BJ (cell line): ENCODE measurements at regions of chr22 and their contacts with region 1.

Region 1: GRCh38 chr22:31080848-31081649 is at the start of gene SMTN:
- DNase-seq: peak; percentile 41
- H3K4me3 ChIP-seq: peak within 1 kb of the TSS; percentile 63
- H3K27me3 ChIP-seq: no peaks in the 10 kb centered on the region
- CTCF ChIP-seq: no peak
- polyA plus RNA-seq, gene SMTN: 16.9 and 45.7 TPM in 2 replicates

Region 2: GRCh38 chr22:30968924-30969539 is 112.0 kb before region 1 on chr22 and contains the start of gene TUG1:
- CTCF ChIA-PET with region 1: interaction called, 29 read pairs
- POLR2A ChIA-PET with region 1: interaction called, 6 read pairs
- DNase-seq: peak; percentile 87
- H3K4me3 ChIP-seq: peak within 1 kb of the TSS; percentile 83
- H3K27me3 ChIP-seq: no peaks in the 10 kb centered on the region
- CTCF ChIP-seq: no peak
- polyA plus RNA-seq, gene TUG1: 63.7 and 105 TPM in 2 replicates

Region 3: GRCh38 chr22:31055635-31056159 is 25.4 kb before region 1 on chr22:
- CTCF ChIA-PET with region 1: interaction called, 15 read pairs
- POLR2A ChIA-PET with region 1: interaction called, 4 read pairs
- DNase-seq: peak; percentile 93
- H3K4me3 ChIP-seq: no peak overlapping the region
- H3K27me3 ChIP-seq: no peaks in the 10 kb centered on the region
- CTCF ChIP-seq: no peak

Region 4: GRCh38 chr22:31107178-31107893 is 26.3 kb after region 1 on chr22 and contains the start of gene SELENOM:
- CTCF ChIA-PET with region 1: interaction called, 30 read pairs
- POLR2A ChIA-PET with region 1: no interaction called
- DNase-seq: peak; percentile 89
- H3K4me3 ChIP-seq: peak within 1 kb of the TSS; percentile 85
- H3K27me3 ChIP-seq: no peaks in the 10 kb centered on the region
- CTCF ChIP-seq: peak; percentile 99
- polyA plus RNA-seq, gene SELENOM: 215 and 292 TPM in 2 replicates